ENCODE measurements at regions of chr10 and their contacts with region 1.

Region 1: DNA sequence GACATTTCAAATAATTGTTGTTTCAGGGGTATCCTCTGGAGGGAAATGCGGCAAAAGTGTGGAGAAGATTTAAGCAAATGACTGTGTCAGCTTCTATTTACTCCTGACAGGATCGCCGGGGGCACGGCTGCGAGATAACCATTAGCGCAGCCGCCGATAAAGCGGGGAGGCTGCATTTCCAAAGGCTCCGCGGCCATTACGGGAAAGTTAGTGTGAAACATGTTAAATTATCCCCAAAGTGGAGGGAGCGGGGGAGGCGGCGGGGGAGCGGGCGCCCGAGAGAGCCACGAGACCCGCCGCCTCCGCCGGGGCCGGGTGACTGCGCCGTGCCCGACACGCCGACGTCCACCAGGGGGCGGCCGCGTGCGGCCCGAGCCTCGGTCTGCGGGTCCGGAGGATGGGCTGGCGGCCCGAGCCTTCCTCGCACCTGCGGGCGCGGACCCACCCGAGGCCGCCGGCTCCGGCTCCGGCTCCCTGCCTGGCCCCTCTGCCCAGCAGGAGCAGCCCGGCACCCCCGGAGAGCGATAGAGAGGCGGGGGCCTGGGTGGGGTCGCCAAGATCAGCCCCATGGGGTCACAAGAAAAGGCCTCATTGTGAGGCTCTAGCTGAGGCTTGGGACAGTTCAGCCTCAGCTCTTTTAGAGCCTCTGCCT is 74.4 kb upstream of the PAX2 start:
- DNase-seq: peak; percentile 57
- H3K4me3 Mint-ChIP-seq: peak overlapping the region; percentile 60
- H3K27ac Mint-ChIP-seq: no peak overlapping the region
- H3K4me1 Mint-ChIP-seq: peaks cover 9% of the 10 kb centered on the region
- H3K27me3 Mint-ChIP-seq: peaks cover 69% of the 10 kb centered on the region

Region 2: GRCh38 chr10:100872034-100872791 is 201.3 kb after region 1 on chr10:
- intact Hi-C with region 1: loop called (anchors 1 kb)
- DNase-seq: peak; percentile 28
- H3K4me3 Mint-ChIP-seq: no peak overlapping the region
- H3K27ac Mint-ChIP-seq: no peak overlapping the region
- H3K4me1 Mint-ChIP-seq: no peaks in the 10 kb centered on the region
- H3K27me3 Mint-ChIP-seq: peaks cover 11% of the 10 kb centered on the region

Region 3: GRCh38 chr10:100878291-100878910 is 207.4 kb after region 1 on chr10:
- intact Hi-C with region 1: loop called (anchors 1 kb)
- DNase-seq: no peak
- H3K4me3 Mint-ChIP-seq: no peak overlapping the region
- H3K27ac Mint-ChIP-seq: no peak overlapping the region
- H3K4me1 Mint-ChIP-seq: no peaks in the 10 kb centered on the region
- H3K27me3 Mint-ChIP-seq: peaks cover 2% of the 10 kb centered on the region